ENCODE measurements at regions of chr2 and their contacts with region 1.

Region 1: GRCh38 chr2:210476194-210477128 is at the start of gene LANCL1:
- DNase-seq: peak; percentile 77
- H3K4me3 Mint-ChIP-seq: peak within 1 kb of the TSS; percentile 96
- H3K27ac Mint-ChIP-seq: peak within 1 kb of the TSS; percentile 96
- H3K4me1 Mint-ChIP-seq: peaks cover 35% of the 10 kb centered on the region
- H3K27me3 Mint-ChIP-seq: no peaks in the 10 kb centered on the region
- total RNA-seq, gene LANCL1: 35.0 and 35.1 TPM in 2 replicates

Region 2: GRCh38 chr2:210171309-210172203 is 304.9 kb before region 1 on chr2 and contains the start of gene KANSL1L:
- intact Hi-C with region 1: loop called (anchors 2 kb)
- DNase-seq: peak; percentile 95
- H3K4me3 Mint-ChIP-seq: peak within 1 kb of the TSS; percentile 96
- H3K27ac Mint-ChIP-seq: peak within 1 kb of the TSS; percentile 99
- H3K4me1 Mint-ChIP-seq: peaks cover 26% of the 10 kb centered on the region
- H3K27me3 Mint-ChIP-seq: peaks cover 21% of the 10 kb centered on the region
- total RNA-seq, gene KANSL1L: 4.9 and 6.5 TPM in 2 replicates

Region 3: GRCh38 chr2:210195101-210195852 is 281.2 kb before region 1 on chr2:
- intact Hi-C with region 1: no loop called
- DNase-seq: no peak
- H3K4me3 Mint-ChIP-seq: no peak overlapping the region
- H3K27ac Mint-ChIP-seq: no peak overlapping the region
- H3K4me1 Mint-ChIP-seq: peaks cover 3% of the 10 kb centered on the region
- H3K27me3 Mint-ChIP-seq: peaks cover 10% of the 10 kb centered on the region

Region 4: DNA sequence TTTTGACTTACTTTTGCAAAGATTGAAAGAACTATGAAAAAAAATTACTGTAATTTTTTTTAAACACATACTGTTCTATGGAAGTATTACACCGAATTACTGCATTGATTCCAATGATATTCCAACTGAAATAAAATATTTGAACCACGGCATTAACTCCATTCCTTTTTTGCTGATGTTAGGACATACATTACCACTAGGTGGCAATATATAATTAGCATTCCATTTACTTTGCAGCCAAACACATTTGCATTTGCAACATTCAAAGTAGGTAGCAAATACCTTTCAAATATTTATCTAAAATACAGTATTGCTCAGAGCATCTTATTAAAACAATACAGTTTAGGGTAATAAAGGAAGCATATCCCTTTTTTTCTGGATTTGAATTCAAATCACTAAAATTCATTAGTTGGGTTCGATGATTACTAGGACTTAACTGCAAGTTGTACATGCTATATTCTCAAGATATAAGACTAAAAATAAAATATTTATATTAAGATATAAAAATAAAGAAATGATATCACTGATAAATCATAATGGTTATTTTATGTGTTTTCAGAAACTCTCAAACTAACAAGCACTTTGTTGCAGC is 31.2 kb before region 1 on chr2:
- intact Hi-C with region 1: loop called (anchors 1 kb)
- DNase-seq: no peak
- H3K4me3 Mint-ChIP-seq: no peak overlapping the region
- H3K27ac Mint-ChIP-seq: no peak overlapping the region
- H3K4me1 Mint-ChIP-seq: peaks cover 11% of the 10 kb centered on the region
- H3K27me3 Mint-ChIP-seq: no peaks in the 10 kb centered on the region

Region 5: DNA sequence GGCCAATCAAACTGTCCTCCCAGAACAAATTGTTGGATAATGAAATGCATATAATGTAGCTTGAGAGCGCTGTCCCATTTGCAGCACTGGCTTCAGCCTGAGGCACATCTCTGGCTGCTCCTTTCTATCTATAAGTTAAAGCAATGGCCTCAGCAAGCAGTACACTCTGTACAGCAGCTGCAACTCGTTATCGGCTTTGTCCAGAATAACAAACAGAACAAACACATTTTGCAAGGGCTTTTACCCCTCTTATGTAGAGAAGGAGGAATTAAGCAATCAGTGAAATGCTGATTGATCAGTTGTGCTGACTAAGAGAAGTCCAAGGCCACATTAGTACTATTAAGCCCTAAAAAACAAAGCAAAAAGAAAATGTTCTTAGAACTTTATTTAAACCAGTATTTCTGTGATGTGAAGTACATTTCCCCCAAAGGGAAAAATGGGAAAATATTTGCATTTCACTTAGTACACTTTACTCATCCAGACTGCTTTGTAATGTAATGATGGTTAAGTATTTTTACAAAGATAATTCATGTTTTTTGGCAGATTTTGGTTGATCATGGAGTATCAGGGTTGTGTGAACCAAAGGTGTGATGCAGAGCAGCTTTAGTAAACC is 64.9 kb after region 1 on chr2:
- intact Hi-C with region 1: no loop called
- DNase-seq: no peak
- H3K4me3 Mint-ChIP-seq: no peak overlapping the region
- H3K27ac Mint-ChIP-seq: no peak overlapping the region
- H3K4me1 Mint-ChIP-seq: no peaks in the 10 kb centered on the region
- H3K27me3 Mint-ChIP-seq: no peaks in the 10 kb centered on the region

Measured in activated T-helper 2 cell treated with anti-CD3 and anti-CD28 coated beads, Interferon-gamma antibody, Interleukin-2, Interleukin-4, amounts not matched to agents 10 μg/mL and 5 μg/mL and 100 μg/mL, durations not matched to agents 14 hours and 24 hours and 36 hours (primary cell).